Sigmoid colon (tissue), 7 donors: ENCODE measurements at regions of chr16 and their contacts with region 1.

Region 1: GRCh38 chr16:2777231-2777902 is at the start of gene ELOB:
- DNase-seq: peak; percentile 93
- H3K4me3 ChIP-seq: peak within 1 kb of the TSS; percentile 68 to 99 (median 88)
- H3K27ac ChIP-seq: peak within 1 kb of the TSS; percentile 93 to 100 (median 98)
- H3K4me1 ChIP-seq: peaks cover 4 to 33% (median 26%) of the 10 kb centered on the region in 4 donors
- H3K27me3 ChIP-seq: no peaks in the 10 kb centered on the region
- CTCF ChIP-seq: no peak
- EP300 ChIP-seq: peak in 1 of 4 donors; percentile 6
- POLR2A ChIP-seq: peak; percentile 52 to 55
- total RNA-seq, gene ELOB: 329 to 1,166 (median 508) TPM

Region 2: GRCh38 chr16:2531767-2532493 is 245.4 kb before region 1 on chr16:
- intact Hi-C with region 1: loop called (anchors 5 kb)
- DNase-seq: peak; percentile 100
- H3K4me3 ChIP-seq: peak overlapping the region; percentile 69 to 80 (median 72)
- H3K27ac ChIP-seq: peak overlapping the region; percentile 97 to 98 (median 98)
- H3K4me1 ChIP-seq: peaks cover 0 to 33% (median 14%) of the 10 kb centered on the region in 4 donors
- H3K27me3 ChIP-seq: no peaks in the 10 kb centered on the region
- CTCF ChIP-seq: no peak
- EP300 ChIP-seq: peak in 1 of 4 donors; percentile 75
- POLR2A ChIP-seq: peak; percentile 51 to 63

Region 3: GRCh38 chr16:2682209-2683021 is 95.0 kb before region 1 on chr16 and contains the start of gene KCTD5:
- intact Hi-C with region 1: loop called (anchors 5 kb)
- DNase-seq: peak; percentile 98
- H3K4me3 ChIP-seq: peak within 1 kb of the TSS; percentile 80 to 100 (median 96)
- H3K27ac ChIP-seq: peak within 1 kb of the TSS; percentile 84 to 94 (median 87)
- H3K4me1 ChIP-seq: peaks cover 4 to 30% (median 21%) of the 10 kb centered on the region in 4 donors
- H3K27me3 ChIP-seq: no peaks in the 10 kb centered on the region
- CTCF ChIP-seq: no peak
- EP300 ChIP-seq: no peak
- POLR2A ChIP-seq: peak; percentile 79 to 94
- total RNA-seq, gene KCTD5: 9.5 to 17.1 (median 11.5) TPM

Region 4: DNA sequence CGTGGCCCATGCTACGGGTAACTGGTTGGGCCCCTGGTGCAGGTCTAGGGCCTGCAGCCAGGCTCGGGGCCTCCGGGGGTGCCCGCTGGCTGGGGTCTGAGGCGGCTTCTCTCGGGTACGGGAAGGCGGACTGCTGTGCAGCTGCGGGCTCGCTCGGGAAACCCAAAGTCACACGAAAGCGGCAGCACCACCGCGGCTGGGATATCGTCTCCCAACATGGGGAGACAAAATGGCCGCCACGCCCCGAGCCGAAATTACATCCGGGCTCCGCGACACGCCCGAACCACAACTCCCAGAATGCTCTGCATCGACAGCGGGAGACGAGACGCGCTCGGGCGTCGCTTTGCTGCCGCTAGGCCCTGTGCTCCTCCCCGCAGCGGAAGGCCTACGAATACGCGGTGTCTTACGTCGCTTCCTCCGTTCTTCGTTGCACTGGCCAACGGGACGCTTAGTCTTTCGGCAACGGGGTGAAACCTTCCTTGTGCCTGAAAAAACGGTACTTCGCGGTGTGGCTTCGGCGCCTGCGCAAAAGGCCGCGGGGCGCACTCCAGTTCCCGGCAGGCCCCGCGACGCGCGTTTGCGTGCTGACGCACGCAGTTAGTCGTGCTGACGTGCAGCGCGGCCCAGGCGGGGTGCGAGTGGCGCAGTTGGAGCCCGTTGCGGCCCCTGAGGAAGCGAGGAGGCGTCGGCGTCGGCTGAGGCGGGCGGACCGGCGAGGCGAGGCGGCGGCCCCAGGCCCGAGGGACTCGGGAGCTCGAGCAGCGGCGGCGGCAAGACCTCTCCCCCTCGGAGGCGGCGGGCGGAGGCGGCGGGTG is 25.1 kb before region 1 on chr16 and contains the start of gene SRRM2:
- intact Hi-C with region 1: loop called (anchors 1 kb)
- DNase-seq: peak; percentile 98
- H3K4me3 ChIP-seq: peak within 1 kb of the TSS; percentile 77 to 94 (median 84)
- H3K27ac ChIP-seq: peak within 1 kb of the TSS; percentile 98 to 99 (median 99)
- H3K4me1 ChIP-seq: peaks cover 0 to 45% (median 38%) of the 10 kb centered on the region in 4 donors
- H3K27me3 ChIP-seq: no peaks in the 10 kb centered on the region
- CTCF ChIP-seq: peak in 1 of 4 experiments; percentile 25
- EP300 ChIP-seq: peak in 2 of 4 donors; percentile 22 to 38
- POLR2A ChIP-seq: peak; percentile 61 to 88
- total RNA-seq, gene SRRM2: 181 to 826 (median 219) TPM

Region 5: DNA sequence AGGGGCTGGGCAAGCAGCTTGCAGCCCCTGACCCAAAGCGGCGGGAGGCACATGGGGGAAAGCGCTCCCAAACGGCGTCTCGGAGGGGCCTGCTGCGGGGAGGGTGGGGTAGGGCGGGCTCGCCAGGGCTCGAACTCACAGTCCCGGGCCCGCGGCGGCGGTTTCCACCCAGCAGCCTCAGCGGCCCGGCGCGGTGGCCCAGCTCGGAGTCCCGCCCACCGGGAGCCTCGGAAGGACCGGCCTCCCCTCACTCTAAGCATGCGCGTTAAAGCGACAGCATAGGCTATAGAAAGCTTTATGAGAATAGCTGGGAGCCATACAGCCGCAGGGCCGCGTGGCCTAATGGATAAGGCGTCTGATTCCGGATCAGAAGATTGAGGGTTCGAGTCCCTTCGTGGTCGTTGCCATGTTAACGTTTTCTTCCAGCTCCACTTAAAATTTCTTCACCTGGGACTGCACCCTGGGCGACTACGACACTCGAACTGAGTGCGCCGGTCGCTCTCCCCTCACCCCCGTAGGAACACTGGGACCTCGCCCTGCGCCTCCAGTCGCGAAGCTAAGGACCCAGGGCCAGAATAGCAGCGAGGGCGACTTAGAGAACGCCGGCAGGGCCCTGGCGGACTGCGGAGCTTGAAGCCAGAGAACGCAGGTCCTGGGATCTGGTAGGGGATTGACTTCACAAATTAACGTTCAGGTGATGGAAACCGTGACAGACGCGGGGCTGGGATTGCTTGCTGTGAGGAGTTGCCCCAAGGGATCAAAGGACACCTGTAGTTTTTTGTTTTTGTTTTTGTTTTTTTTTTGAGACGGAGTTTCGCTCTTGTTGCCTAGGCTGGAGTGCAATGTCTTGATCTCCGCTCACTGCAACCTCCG is 373.2 kb after region 1 on chr16:
- intact Hi-C with region 1: loop called (anchors 10 kb)
- DNase-seq: peak; percentile 97
- H3K4me3 ChIP-seq: peak overlapping the region; percentile 47 to 72 (median 66)
- H3K27ac ChIP-seq: peak overlapping the region; percentile 80 to 93 (median 88)
- H3K4me1 ChIP-seq: peaks cover 0 to 28% (median 24%) of the 10 kb centered on the region in 4 donors
- H3K27me3 ChIP-seq: no peaks in the 10 kb centered on the region
- CTCF ChIP-seq: no peak
- EP300 ChIP-seq: no peak
- POLR2A ChIP-seq: no peak

Region 6: DNA sequence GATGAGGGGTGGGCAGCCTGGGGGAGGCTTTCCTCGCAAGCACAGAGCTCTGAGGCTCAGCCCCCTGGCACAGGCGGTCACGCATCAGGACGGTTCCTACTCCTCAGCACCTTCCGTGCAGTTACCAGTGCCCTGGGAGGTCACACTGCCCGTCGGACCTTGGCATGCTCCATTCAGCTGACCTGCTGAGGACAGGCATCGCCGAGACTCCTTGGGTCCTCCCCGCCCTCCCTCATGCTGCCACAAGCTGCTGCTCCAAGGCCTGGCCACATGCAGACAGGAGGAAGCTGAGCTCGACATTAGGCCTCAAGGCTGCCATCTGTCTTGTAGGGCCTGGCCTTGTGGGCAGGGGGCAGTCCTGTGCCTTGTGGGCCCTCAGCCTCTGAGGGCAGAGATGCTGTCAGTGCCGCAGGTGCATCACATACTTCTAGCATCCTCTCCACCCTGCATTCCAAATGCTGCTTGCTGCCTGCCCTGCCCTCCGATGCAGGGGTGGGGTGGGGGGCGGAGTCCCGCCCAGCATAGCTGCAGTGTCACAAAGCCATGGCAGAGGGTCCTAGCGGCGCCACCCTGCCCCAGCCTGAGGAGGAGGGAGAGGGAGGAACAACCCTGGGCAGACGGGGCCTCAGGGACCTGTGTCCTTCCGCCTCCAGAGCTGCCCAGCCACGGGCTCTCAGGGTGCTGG is 708.6 kb after region 1 on chr16:
- intact Hi-C with region 1: no loop called
- DNase-seq: no peak
- H3K4me3 ChIP-seq: no peak overlapping the region
- H3K27ac ChIP-seq: no peak overlapping the region
- H3K4me1 ChIP-seq: no peaks in the 10 kb centered on the region
- H3K27me3 ChIP-seq: no peaks in the 10 kb centered on the region
- CTCF ChIP-seq: no peak
- EP300 ChIP-seq: no peak
- POLR2A ChIP-seq: no peak